ENCODE measurements at regions of chr10 and their contacts with region 1.

Region 1: DNA sequence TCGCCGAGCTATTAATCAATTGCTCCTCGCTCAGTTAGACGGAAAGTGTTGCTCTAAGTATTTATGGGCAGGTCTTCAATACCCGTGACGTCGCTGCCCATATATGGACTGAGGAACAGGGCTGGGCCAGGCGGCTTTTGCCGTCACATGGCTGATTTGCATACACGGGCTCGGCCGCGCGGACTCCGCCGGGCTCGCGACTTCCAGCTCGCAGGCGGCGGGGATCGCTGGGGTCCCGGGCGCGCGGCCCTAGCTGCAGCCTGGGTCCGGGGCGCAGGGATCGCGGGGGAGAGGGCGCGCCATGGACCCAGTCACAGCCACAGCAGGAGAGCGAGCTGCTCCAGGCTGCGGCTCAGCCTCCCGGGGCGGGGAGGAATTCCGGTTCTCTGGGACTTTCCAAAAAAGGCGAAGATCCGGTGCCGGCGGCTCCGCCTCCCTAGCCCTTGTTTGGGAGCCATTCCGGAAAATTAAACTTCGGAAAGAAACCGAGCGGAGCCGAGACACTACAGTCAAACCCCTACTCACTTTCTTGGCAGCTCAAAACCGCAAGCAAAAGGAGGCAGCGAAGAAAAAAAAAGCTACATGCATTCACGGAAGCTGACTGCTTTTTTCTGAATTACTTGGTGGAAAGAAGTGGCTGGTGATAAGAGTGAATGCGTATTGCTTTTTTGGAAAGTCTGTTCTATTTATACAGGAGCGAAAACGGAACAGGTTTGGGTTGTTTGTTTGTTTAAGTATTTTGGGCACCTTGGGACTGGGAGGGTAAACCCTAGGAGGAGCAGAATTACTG is at the start of gene EGR2:
- DNase-seq: peak; percentile 89 to 94
- ATAC-seq: peak; percentile 82 to 93 (median 87)
- H3K4me3 ChIP-seq: peak within 1 kb of the TSS; percentile 54 to 94 (median 74)
- H3K27ac ChIP-seq: peak within 1 kb of the TSS; percentile 11 to 93 (median 82)
- H3K4me1 ChIP-seq: peaks cover 2 to 49% (median 44%) of the 10 kb centered on the region in 9 donors
- H3K27me3 ChIP-seq: peaks cover 0 to 67% (median 47%) of the 10 kb centered on the region in 7 donors
- CTCF ChIP-seq: peak in 1 of 9 donors; percentile 5
- total RNA-seq, gene EGR2: 0.49 to 19.3 (median 3.6) TPM

Region 2: DNA sequence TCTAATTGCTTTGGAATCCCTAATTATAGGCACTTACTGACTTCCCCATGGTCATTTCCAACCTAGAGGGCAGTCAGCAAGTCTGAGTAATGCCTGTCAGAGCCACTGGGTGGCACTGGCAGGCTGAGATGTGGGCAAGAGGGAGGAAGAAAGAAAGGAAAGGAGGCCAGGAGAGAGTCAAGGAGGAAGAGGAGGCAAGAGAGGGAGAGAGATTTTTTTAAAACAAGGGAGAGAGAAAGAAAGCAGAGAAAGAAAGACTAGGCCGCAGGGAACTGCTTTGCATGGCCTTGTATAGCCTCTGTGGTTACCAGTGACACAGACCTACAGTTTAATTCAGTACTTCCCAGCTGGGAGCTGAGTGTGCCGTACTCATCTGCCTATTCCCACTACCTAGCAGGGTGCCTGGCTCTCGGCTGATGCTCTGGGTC is 222.4 kb before region 1 on chr10:
- intact Hi-C with region 1: loop called in 3 of 10 experiments (anchors 1 to 5 kb)
- DNase-seq: peak; percentile 45 to 65
- ATAC-seq: peak; percentile 79 to 92 (median 85)
- H3K4me3 ChIP-seq: no peak overlapping the region
- H3K27ac ChIP-seq: no peak overlapping the region
- H3K4me1 ChIP-seq: peaks cover 0 to 6% (median 0%) of the 10 kb centered on the region in 9 donors
- H3K27me3 ChIP-seq: peaks cover 0 to 9% (median 0%) of the 10 kb centered on the region in 7 donors
- CTCF ChIP-seq: peak; percentile 70 to 94 (median 87)

Region 3: GRCh38 chr10:62632071-62632809 is 184.3 kb before region 1 on chr10:
- intact Hi-C with region 1: loop called in 1 of 10 experiments (anchors 2 kb)
- DNase-seq: peak; percentile 32 to 77
- ATAC-seq: peak; percentile 75 to 96 (median 91)
- H3K4me3 ChIP-seq: peak overlapping the region in 1 of 10 donors; percentile 6
- H3K27ac ChIP-seq: peak overlapping the region in 4 of 10 donors; percentile 9 to 84 (median 30)
- H3K4me1 ChIP-seq: peaks cover 0 to 50% (median 13%) of the 10 kb centered on the region in 9 donors
- H3K27me3 ChIP-seq: no peaks in the 10 kb centered on the region
- CTCF ChIP-seq: no peak

Region 4: DNA sequence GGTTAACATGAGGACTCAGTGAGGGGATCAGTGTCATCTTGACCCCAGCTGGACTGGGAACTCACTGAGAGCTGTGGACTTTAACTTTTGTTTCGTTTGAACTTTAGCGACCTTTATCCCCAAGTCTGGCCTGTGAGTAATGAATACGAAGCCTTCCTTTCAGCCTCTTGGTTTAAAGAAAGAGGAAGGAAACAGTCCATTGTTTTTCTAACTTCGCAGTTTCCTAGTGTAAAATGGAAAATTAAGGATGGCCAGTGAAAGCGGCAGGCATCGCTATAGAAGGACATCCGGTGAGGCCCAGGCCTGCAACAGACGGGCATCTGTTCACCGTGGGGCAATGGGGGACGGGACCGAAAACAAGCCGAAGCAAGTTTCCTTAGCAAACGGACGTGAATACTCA is 56.1 kb before region 1 on chr10:
- intact Hi-C with region 1: loop called in 2 of 10 experiments (anchors 2 to 5 kb)
- DNase-seq: peak; percentile 19 to 37
- ATAC-seq: peak in 7 of 8 donors; percentile 9 to 84 (median 64)
- H3K4me3 ChIP-seq: no peak overlapping the region
- H3K27ac ChIP-seq: peak overlapping the region in 8 of 10 donors; percentile 26 to 82 (median 68)
- H3K4me1 ChIP-seq: peaks cover 3 to 40% (median 27%) of the 10 kb centered on the region in 9 donors
- H3K27me3 ChIP-seq: no peaks in the 10 kb centered on the region
- CTCF ChIP-seq: no peak

Region 5: DNA sequence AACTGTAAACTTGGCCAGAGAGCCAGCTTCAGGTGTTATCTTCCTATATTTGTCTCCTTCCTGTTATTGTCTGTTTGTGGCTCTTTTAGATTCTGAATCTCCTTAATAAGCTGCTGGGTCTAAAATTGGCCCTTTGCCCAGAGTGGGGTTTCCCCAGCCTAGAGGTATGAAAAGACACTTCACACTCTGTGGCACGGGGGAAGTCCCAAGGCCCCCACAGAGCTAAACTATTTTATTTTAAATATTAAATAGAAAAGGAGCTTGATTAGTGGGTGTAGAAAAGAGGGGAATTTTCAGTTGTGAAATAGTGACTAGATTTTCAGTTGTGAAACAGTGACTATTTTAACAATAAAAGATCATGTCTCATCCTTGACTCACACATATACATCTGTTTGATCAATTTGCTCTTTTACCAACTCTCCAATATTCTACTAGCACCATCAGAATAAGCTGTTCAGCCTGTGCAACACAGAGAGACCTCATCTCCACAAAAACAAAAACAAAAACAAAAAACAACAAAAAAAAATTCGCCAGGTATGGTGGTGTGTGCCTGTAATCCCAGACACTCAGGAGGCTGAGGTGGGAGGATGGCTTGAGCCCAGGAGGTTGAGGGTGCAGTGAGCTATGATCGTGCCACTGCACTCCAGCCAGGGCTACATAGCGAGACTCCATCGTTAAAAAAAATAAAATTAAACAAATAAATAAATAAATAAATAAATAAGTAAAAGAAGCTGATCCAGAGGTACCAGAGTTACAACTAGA is 36.9 kb before region 1 on chr10:
- intact Hi-C with region 1: no loop called
- DNase-seq: no peak
- ATAC-seq: no peak
- H3K4me3 ChIP-seq: no peak overlapping the region
- H3K27ac ChIP-seq: no peak overlapping the region
- H3K4me1 ChIP-seq: peaks cover 0 to 12% (median 0%) of the 10 kb centered on the region in 9 donors
- H3K27me3 ChIP-seq: no peaks in the 10 kb centered on the region
- CTCF ChIP-seq: no peak

Region 6: DNA sequence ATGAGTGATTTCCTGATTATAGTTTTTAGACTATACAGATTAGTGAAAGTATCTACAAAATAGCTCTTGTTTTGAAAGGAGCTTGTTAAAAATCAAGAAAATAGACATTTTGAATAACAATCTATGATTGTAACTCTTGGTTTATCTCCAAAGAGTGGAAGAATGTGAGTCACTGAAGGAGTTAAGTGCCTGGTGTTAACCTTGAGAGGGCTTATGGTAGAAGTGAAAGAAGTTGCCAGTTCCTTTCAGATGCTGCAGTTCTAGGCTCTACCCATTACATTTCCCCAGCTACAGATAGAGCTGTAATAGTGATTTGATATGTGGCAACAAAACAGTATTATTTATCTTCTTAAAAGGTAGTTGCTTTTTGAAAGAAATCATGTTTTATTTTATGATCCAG is 329.3 kb after region 1 on chr10:
- intact Hi-C with region 1: loop called in 3 of 10 experiments (anchors 10 kb)
- DNase-seq: no peak
- ATAC-seq: no peak
- H3K4me3 ChIP-seq: no peak overlapping the region
- H3K27ac ChIP-seq: no peak overlapping the region
- H3K4me1 ChIP-seq: peaks cover 0 to 40% (median 18%) of the 10 kb centered on the region in 9 donors
- H3K27me3 ChIP-seq: no peaks in the 10 kb centered on the region
- CTCF ChIP-seq: no peak